Psoas muscle (tissue), 8 donors: ENCODE measurements at regions of chr4 and their contacts with region 1.

Region 1: DNA sequence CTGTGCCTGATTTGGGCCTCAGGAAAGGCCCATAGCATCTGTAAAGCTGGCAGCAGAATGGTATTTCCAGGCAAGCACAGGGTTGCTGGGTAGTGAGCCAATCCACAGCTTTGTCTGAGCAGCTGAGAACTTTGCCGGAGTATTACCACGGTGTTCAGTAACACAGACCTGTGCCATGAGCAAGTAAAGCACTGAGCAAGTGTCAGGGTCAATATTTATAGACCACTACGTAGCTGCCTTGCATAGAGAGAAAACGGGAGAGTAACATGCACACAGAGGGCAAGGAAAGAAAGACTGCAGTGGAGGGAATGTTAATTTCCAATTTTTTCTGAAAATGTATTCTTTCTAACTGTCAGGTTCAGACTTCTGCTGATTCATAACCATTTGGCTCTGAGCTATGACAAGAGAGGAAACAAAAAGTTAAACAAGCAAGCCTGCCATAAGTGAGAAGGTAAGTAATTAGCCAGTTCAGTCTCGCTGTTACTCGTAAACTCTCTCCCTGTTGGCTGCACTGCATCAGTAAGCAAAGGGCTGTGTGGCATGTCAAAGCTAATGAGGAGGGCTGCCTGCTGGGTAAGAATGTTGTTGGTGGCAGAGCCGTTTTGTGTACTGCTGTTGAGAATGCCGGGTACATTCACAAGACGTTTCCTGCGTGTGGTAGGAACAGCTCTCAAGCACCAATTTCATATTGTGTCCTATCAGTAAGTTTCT is 238.1 kb downstream of the BMPR1B start:
- DNase-seq: peak; percentile 24 to 58
- ATAC-seq: peak; percentile 98 to 99 (median 99)
- H3K4me3 ChIP-seq: peak overlapping the region; percentile 67
- H3K27ac ChIP-seq: peak overlapping the region; percentile 84
- H3K4me1 ChIP-seq: peaks cover 13% of the 10 kb centered on the region
- H3K27me3 ChIP-seq: no peaks in the 10 kb centered on the region
- CTCF ChIP-seq: no peak

Region 2: DNA sequence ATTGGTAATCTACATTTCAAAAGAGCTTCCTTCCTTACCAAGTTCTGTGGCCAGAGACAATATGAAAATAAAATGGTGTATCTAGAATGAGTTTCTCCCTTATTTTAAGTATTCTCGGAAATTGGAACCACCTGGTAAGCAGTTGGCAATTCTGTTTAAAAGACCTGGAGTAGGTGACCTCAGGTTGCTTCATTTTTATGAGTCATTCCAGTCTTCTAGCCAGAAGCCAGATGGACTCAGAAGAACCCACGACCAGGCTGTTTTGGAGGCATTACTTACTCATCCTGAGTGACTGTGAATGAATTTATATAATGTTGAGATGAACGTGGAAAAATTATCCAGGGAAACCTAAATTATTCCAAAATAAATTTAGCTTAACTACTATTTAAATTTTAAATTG is 229.0 kb before region 1 on chr4:
- intact Hi-C with region 1: loop called in 1 of 2 experiments (anchors 10 kb)
- DNase-seq: no peak
- ATAC-seq: no peak
- H3K4me3 ChIP-seq: no peak overlapping the region
- H3K27ac ChIP-seq: no peak overlapping the region
- H3K4me1 ChIP-seq: no peaks in the 10 kb centered on the region
- H3K27me3 ChIP-seq: no peaks in the 10 kb centered on the region
- CTCF ChIP-seq: no peak

Region 3: GRCh38 chr4:95049551-95050233 is 53.9 kb after region 1 on chr4:
- intact Hi-C with region 1: loop called in 1 of 2 experiments (anchors 5 kb)
- DNase-seq: no peak
- ATAC-seq: peak in 3 of 4 donors; percentile 33 to 62 (median 54)
- H3K4me3 ChIP-seq: no peak overlapping the region
- H3K27ac ChIP-seq: no peak overlapping the region
- H3K4me1 ChIP-seq: peaks cover 18% of the 10 kb centered on the region
- H3K27me3 ChIP-seq: no peaks in the 10 kb centered on the region
- CTCF ChIP-seq: no peak

Region 4: DNA sequence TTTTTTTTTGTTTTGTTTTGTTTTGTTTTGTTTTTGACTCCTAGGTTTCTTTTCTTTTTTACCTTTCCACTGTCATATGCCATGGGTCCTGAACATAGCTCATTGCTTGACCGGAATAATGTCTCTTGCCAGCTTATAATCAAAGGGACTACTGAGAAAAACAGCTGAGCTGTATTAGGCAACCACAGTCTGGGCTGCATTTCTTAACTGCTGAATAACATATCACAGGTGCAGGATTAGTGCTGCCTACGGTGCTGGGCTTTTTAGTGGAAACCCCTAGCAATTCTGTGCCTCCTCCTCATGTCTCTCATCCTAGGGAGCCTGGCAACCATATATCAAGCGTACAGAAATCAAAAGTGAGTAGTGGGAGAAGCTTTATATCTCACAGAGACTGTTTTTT is 95.4 kb after region 1 on chr4:
- intact Hi-C with region 1: loop called in 1 of 2 experiments (anchors 5 kb)
- DNase-seq: no peak
- ATAC-seq: peak; percentile 86 to 95 (median 93)
- H3K4me3 ChIP-seq: peak overlapping the region; percentile 8
- H3K27ac ChIP-seq: no peak overlapping the region
- H3K4me1 ChIP-seq: peaks cover 12% of the 10 kb centered on the region
- H3K27me3 ChIP-seq: no peaks in the 10 kb centered on the region
- CTCF ChIP-seq: no peak